Ovary (tissue), 10 donors: ENCODE measurements at regions of chr6 and their contacts with region 1.

Region 1: DNA sequence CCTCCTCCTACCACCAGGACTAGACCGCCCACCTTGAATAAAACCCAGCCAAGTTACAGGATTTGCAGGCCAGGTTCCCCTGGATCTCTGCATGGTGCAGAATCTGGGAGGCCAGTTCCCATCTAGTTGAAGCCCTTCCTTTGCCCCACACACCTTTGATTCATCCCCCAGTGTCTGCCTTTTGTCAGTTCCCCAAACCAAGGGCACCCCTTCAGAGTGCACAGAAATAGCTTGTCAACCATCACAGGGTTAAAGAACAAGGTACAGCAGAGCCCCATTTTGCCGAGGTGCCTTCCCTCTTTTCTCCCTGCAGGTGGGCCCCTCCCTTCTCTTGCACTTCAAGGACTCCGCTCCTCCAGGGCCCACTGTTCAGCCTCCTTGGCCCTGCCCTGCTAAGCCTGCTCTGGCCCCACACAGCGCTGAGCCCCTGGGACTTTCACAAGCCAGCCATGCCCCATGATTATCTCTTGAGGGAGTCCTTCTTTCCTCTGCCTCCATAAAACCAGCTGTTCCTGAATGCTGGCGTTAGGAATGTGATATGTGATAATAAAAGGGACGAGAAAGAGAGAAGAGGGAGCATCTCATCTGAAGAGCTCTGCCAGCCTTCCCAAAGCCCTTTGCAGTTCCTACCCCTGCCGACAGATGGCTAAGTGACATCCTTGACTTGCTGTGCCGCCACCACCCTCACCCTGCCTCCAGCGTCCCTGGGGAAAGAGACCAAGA is 280.3 kb downstream of the CDC5L start:
- DNase-seq: no peak
- H3K4me3 ChIP-seq: no peak overlapping the region
- H3K27ac ChIP-seq: no peak overlapping the region
- H3K4me1 ChIP-seq: peaks cover 5% of the 10 kb centered on the region
- H3K27me3 ChIP-seq: no peaks in the 10 kb centered on the region
- CTCF ChIP-seq: no peak
- EP300 ChIP-seq: no peak
- POLR2A ChIP-seq: no peak

Region 2: GRCh38 chr6:44446628-44447306 is 221.1 kb before region 1 on chr6:
- intact Hi-C with region 1: no loop called
- DNase-seq: no peak
- H3K4me3 ChIP-seq: no peak overlapping the region
- H3K27ac ChIP-seq: no peak overlapping the region
- H3K4me1 ChIP-seq: no peaks in the 10 kb centered on the region
- H3K27me3 ChIP-seq: no peaks in the 10 kb centered on the region
- CTCF ChIP-seq: no peak
- EP300 ChIP-seq: no peak
- POLR2A ChIP-seq: no peak

Region 3: GRCh38 chr6:44464527-44465310 is 203.1 kb before region 1 on chr6:
- intact Hi-C with region 1: no loop called
- DNase-seq: peak; percentile 73 to 96 (median 82)
- H3K4me3 ChIP-seq: no peak overlapping the region
- H3K27ac ChIP-seq: peak overlapping the region; percentile 54 to 64
- H3K4me1 ChIP-seq: peaks cover 17% of the 10 kb centered on the region
- H3K27me3 ChIP-seq: no peaks in the 10 kb centered on the region
- CTCF ChIP-seq: no peak
- EP300 ChIP-seq: no peak
- POLR2A ChIP-seq: no peak

Region 4: DNA sequence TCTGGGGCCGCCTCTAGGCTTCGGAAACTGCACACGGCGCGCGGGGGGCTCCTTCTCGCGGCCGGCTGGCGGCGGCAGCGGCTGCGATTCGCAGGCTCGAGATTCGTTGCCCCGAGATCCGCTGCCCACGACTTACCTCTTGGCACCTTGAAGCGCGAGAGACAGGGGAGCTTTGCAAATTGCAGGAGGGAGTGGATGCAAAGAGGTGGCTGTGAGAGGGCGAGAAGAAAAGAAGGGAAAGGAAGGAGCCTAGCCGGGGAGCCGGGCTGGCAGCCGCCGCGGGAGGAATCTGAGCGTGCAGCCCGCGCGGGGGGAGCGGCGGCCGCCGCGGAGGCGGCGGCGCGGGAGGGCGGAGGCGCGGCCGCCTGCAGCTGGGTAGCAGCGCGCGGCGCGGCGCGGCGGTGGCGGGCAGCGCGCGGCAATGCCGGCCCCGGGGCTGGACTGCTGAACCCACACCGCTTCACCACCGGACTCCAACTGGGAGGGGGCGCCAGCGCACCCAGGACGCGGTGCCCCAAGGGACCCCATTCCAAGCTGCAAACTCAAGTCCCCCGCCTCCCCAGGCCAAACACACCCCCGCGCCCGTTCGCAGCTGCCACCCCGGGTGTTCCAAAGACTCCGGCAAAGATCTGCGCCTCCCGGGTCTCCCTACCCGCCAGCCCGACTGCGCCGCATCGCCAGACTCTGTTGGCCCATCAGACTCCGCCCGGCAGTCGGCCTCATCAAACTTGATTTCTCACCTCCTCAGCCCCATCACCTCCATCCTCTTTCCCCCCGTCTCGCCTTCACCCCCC is 754.1 kb after region 1 on chr6:
- intact Hi-C with region 1: loop called in 1 of 4 experiments (anchors 10 kb)
- DNase-seq: peak; percentile 39 to 73 (median 60)
- H3K4me3 ChIP-seq: peak overlapping the region; percentile 46
- H3K27ac ChIP-seq: peak overlapping the region in 1 of 2 donors; percentile 33
- H3K4me1 ChIP-seq: peaks cover 3% of the 10 kb centered on the region
- H3K27me3 ChIP-seq: no peaks in the 10 kb centered on the region
- CTCF ChIP-seq: no peak
- EP300 ChIP-seq: no peak
- POLR2A ChIP-seq: no peak